Natural killer cell (primary cell): ENCODE measurements at regions of chr15 and their contacts with region 1.

Region 1: DNA sequence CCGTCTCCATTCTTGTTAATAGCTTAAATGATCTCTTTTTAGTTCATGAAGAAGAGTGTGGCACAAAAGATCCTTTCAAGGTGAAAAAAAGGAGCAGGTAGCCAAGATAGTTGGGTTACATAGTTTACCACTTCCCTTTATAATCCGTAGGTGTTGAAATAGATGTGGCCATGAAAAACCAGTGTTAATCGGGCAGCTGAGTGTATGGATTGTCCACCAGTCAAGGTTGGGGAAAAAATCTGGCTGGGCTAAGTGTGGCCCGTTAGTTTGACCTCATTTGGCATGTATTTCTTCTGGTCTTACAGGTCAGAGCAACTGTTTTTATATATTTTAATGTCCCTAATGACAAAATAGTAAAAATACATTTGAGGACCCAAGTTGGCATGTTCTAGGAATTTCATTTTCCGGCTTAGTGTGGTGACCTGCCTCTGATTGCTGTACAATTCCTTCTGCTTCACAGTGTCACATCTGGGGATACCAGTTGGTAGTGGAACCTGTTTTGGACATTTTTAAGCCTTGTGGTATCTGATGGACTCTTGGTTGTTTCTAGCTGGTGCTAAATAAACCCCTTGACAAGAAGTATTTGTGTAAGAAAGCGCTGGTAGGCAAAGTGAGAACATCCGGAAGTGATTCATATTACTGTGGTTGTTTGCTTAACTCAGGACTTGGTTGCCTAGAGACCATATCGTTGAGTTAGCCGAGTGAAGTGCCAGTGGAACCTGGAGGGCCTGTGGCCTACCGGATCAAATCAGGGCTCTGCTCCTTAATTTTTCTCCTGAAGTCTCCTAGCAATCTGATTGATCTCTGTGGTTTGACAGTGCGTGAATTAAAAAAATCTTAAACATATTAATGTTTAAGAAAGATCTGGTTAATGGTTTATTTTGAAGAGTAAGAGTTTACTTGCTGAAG is 12.6 kb downstream of the IQGAP1 start:
- DNase-seq: peak; percentile 49 to 94
- ATAC-seq: peak; percentile 79 to 96 (median 96)
- H3K4me3 ChIP-seq: peak overlapping the region; percentile 30
- H3K4me3 Mint-ChIP-seq: peak overlapping the region; percentile 85
- H3K27ac ChIP-seq: peak overlapping the region; percentile 99
- H3K27ac Mint-ChIP-seq: peak overlapping the region; percentile 94 to 97
- H3K4me1 ChIP-seq: peaks cover 49% of the 10 kb centered on the region
- H3K4me1 Mint-ChIP-seq: peaks cover 70 to 79% of the 10 kb centered on the region in 2 donors
- H3K27me3 ChIP-seq: no peaks in the 10 kb centered on the region
- H3K27me3 Mint-ChIP-seq: no peaks in the 10 kb centered on the region
- CTCF ChIP-seq: no peak

Region 2: DNA sequence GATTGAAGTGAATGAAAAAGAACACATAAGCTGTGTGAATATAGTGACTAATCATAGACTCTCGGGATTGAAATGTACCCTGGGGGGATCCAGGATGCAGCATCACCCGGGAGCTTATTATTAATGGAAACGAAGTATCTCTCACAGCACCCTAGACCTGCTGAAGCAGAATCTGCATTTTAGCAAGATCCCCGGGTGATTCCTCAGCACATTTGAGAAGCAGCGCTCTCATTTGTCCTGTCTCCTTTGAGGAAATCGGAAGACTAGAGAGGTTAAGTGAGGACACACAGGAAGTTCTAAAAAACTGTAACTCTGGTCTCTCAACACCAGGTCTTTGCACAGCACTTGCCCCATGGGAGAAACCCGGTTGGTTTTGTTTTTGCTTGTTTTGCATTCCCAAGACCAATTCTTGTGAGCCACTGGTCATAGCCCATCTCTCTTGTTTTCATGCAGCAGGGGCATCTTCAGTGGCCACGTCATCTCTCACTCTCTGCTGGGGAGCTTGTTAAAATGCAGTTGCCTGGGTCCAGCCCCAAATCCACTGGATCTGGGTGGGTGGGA is 369.3 kb before region 1 on chr15:
- intact Hi-C with region 1: loop called (anchors 10 kb)
- DNase-seq: peak in 1 of 2 donors; percentile 60
- ATAC-seq: peak; percentile 28 to 33 (median 30)
- H3K4me3 ChIP-seq: no peak overlapping the region
- H3K4me3 Mint-ChIP-seq: peak overlapping the region; percentile 75
- H3K27ac ChIP-seq: peak overlapping the region; percentile 35
- H3K27ac Mint-ChIP-seq: peak overlapping the region; percentile 88 to 92
- H3K4me1 ChIP-seq: peaks cover 57% of the 10 kb centered on the region
- H3K4me1 Mint-ChIP-seq: peaks cover 58 to 66% of the 10 kb centered on the region in 2 donors
- H3K27me3 ChIP-seq: no peaks in the 10 kb centered on the region
- H3K27me3 Mint-ChIP-seq: no peaks in the 10 kb centered on the region
- CTCF ChIP-seq: no peak

Region 3: DNA sequence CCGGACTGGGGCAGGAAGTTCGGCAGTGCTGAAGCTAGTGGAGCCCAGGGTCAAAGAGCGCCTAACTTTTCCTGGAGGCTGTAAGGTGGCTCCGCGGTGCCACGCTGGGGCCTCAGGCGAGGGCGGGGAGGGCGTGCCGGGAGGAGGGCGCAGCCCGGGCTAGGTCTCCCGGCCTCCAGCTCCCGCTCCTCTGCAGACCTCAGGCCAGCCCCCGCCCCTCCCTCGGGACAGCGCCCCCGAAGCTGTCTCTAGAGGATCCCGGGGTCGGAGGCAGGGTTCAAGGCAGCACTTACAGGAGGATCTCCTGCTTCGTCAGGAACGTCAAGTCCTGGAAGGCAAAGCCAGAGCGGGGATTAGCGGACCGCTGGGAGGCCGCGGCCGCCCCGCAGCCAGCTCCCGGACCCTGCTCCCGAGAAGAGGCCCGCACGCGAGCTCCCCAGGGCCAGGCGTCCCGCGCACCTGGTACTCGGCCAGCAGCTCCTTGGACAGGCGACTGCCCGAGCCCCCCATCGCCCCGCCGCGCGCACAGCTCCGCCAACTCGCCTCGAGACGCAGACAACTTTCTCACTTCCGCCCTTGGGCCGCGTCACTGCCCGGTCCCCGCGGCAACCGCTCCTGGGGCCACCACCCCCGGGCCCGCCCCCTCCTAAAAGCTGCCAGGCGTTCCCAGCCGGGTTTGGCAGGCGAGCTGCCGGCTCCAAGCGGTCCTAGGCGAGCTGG is 167.1 kb before region 1 on chr15 and contains the start of gene CIB1:
- intact Hi-C with region 1: loop called (anchors 2 kb)
- DNase-seq: peak; percentile 66 to 95
- ATAC-seq: peak; percentile 79 to 93 (median 81)
- H3K4me3 ChIP-seq: peak within 1 kb of the TSS; percentile 84
- H3K4me3 Mint-ChIP-seq: peak within 1 kb of the TSS; percentile 90
- H3K27ac ChIP-seq: peak within 1 kb of the TSS; percentile 95
- H3K27ac Mint-ChIP-seq: peak within 1 kb of the TSS; percentile 99
- H3K4me1 ChIP-seq: peaks cover 47% of the 10 kb centered on the region
- H3K4me1 Mint-ChIP-seq: peaks cover 44 to 53% of the 10 kb centered on the region in 2 donors
- H3K27me3 ChIP-seq: no peaks in the 10 kb centered on the region
- H3K27me3 Mint-ChIP-seq: no peaks in the 10 kb centered on the region
- CTCF ChIP-seq: no peak
- total RNA-seq, gene CIB1: 136 to 209 (median 154) TPM

Region 4: GRCh38 chr15:90387537-90388461 is 12.9 kb before region 1 on chr15 and contains the start of gene IQGAP1:
- intact Hi-C with region 1: loop called (anchors 1 kb)
- DNase-seq: peak; percentile 84 to 97
- ATAC-seq: peak; percentile 87 to 99 (median 89)
- H3K4me3 ChIP-seq: peak within 1 kb of the TSS; percentile 97
- H3K4me3 Mint-ChIP-seq: peak within 1 kb of the TSS; percentile 96
- H3K27ac ChIP-seq: peak within 1 kb of the TSS; percentile 97
- H3K27ac Mint-ChIP-seq: peak within 1 kb of the TSS; percentile 53 to 96
- H3K4me1 ChIP-seq: peaks cover 35% of the 10 kb centered on the region
- H3K4me1 Mint-ChIP-seq: peaks cover 48 to 55% of the 10 kb centered on the region in 2 donors
- H3K27me3 ChIP-seq: no peaks in the 10 kb centered on the region
- H3K27me3 Mint-ChIP-seq: no peaks in the 10 kb centered on the region
- CTCF ChIP-seq: no peak
- total RNA-seq, gene IQGAP1: 431 to 493 (median 446) TPM

Region 5: GRCh38 chr15:90412356-90413194 is 11.9 kb after region 1 on chr15:
- intact Hi-C with region 1: loop called (anchors 1 kb)
- DNase-seq: peak in 1 of 2 donors; percentile 48
- ATAC-seq: peak; percentile 29 to 66 (median 38)
- H3K4me3 ChIP-seq: no peak overlapping the region
- H3K4me3 Mint-ChIP-seq: peak overlapping the region; percentile 83
- H3K27ac ChIP-seq: peak overlapping the region; percentile 73
- H3K27ac Mint-ChIP-seq: peak overlapping the region; percentile 89 to 93
- H3K4me1 ChIP-seq: peaks cover 45% of the 10 kb centered on the region
- H3K4me1 Mint-ChIP-seq: peaks cover 86 to 91% of the 10 kb centered on the region in 2 donors
- H3K27me3 ChIP-seq: no peaks in the 10 kb centered on the region
- H3K27me3 Mint-ChIP-seq: no peaks in the 10 kb centered on the region
- CTCF ChIP-seq: no peak

Region 6: GRCh38 chr15:90419738-90420406 is 19.2 kb after region 1 on chr15:
- intact Hi-C with region 1: loop called (anchors 2 kb)
- DNase-seq: no peak
- ATAC-seq: peak in 2 of 3 donors; percentile 24 to 41
- H3K4me3 ChIP-seq: no peak overlapping the region
- H3K4me3 Mint-ChIP-seq: peak overlapping the region; percentile 81
- H3K27ac ChIP-seq: peak overlapping the region; percentile 30
- H3K27ac Mint-ChIP-seq: peak overlapping the region; percentile 89 to 93
- H3K4me1 ChIP-seq: peaks cover 48% of the 10 kb centered on the region
- H3K4me1 Mint-ChIP-seq: peaks cover 77 to 81% of the 10 kb centered on the region in 2 donors
- H3K27me3 ChIP-seq: no peaks in the 10 kb centered on the region
- H3K27me3 Mint-ChIP-seq: no peaks in the 10 kb centered on the region
- CTCF ChIP-seq: no peak